ENCODE measurements at regions of chr12 and their contacts with region 1.

Region 1: DNA sequence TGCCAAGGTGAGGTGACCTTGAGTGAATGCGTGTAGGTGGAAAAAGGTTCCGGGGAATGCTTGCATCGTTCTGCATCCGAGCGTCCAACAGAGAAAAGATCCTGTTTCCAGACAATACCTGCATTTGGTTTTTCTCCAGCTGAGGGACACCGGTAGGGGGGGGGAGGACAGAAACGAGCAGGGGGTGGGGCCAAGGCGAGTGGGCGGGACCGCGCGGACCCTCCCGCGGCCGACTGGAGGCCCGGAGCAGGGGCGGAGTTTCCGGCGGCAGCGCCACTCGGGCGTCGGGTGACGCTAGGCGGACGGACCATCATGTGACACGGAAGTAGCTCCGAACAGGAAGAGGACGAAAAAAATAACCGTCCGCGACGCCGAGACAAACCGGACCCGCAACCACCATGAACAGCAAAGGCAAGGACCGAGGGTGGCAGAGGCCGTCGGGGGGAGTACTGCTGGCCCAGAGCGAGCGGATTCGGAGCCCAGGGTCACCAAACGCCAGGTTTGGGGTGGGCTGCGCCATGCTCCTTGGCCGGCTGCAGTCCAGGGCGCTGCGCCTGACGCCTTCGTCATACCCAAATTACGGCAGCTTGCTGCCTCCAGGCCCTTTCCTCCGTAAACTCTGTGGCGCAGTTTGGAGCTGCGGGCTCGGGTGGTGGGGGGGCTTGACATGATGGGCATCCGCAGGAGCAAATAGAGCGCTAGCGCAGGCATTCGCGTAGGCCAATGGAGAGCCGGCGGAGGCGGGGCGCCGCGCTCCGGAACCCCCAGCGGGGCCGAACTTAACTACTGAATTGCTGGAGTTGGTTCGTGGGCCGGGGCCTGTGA is at the start of gene DAZAP2:
- DNase-seq: peak; percentile 98
- ATAC-seq: peak; percentile 99
- H3K4me3 ChIP-seq: peak within 1 kb of the TSS; percentile 72 to 80
- H3K27ac ChIP-seq: peak within 1 kb of the TSS; percentile 92 to 97
- H3K4me1 ChIP-seq: no peaks in the 10 kb centered on the region
- H3K27me3 ChIP-seq: no peaks in the 10 kb centered on the region
- total RNA-seq, gene DAZAP2: 167 to 171 TPM

Region 2: DNA sequence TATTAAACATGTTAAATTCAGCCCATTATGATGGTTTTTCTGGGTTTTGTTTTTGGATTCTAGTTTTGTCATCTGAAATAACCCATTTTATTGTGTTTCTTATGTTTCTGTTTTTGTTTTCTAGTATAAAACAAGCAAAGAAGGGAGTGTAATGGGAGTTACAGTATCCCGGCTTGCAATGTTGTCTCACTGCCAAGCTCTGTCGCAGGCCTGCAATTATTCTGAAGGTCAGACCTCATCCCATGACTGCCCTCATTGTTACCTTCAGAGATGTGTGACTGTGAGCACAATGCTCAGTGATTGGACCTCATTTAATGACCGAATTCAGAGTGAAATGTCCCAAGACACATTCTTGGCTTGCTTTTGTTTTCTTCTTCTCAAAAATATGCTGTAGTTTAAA is 547.8 kb before region 1 on chr12:
- intact Hi-C with region 1: no loop called
- DNase-seq: no peak
- ATAC-seq: no peak
- H3K4me3 ChIP-seq: no peak overlapping the region
- H3K27ac ChIP-seq: no peak overlapping the region
- H3K4me1 ChIP-seq: no peaks in the 10 kb centered on the region
- H3K27me3 ChIP-seq: no peaks in the 10 kb centered on the region

Region 3: DNA sequence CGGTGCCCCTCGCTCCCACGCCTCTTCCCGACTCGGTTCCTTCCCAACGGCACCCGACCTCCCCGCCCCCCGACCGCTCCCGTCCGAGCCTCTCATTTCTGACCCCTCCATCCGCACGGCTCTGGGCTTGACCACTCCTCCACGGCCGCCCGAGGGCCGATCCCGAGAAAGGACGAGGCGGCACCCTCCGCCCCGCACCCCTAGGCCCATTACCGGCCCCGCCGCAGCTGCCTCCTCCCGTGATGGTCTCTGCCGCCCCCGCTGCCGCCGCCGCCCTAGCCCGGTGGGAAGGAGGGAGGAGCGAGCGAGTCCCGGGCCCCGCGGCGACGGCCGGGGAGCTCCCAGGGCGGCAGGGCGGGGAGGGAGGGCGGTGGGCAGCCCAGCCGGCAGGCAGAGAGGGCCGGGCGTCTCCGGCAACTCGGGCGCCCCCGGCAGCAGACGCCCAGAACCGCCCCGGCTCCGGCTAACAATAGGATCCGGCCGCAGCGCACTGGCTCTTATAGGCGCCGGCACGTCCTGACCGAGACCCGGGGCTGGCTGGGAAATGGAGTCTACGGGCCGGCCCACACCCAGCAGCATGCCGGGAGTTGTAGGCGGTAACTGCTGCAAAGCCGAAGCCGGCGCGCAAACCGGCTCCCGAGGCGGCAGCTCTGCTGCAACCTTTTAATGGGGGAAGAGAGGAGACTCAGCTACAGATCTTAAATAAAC is 155.4 kb before region 1 on chr12 and contains the start of gene CSRNP2:
- intact Hi-C with region 1: loop called in 1 of 2 experiments (anchors 5 kb)
- DNase-seq: peak; percentile 98 to 99
- ATAC-seq: peak; percentile 100
- H3K4me3 ChIP-seq: peak within 1 kb of the TSS; percentile 78 to 88
- H3K27ac ChIP-seq: peak within 1 kb of the TSS; percentile 62 to 79
- H3K4me1 ChIP-seq: no peaks in the 10 kb centered on the region
- H3K27me3 ChIP-seq: no peaks in the 10 kb centered on the region
- total RNA-seq, gene CSRNP2: 32.3 to 34.5 TPM

Region 4: DNA sequence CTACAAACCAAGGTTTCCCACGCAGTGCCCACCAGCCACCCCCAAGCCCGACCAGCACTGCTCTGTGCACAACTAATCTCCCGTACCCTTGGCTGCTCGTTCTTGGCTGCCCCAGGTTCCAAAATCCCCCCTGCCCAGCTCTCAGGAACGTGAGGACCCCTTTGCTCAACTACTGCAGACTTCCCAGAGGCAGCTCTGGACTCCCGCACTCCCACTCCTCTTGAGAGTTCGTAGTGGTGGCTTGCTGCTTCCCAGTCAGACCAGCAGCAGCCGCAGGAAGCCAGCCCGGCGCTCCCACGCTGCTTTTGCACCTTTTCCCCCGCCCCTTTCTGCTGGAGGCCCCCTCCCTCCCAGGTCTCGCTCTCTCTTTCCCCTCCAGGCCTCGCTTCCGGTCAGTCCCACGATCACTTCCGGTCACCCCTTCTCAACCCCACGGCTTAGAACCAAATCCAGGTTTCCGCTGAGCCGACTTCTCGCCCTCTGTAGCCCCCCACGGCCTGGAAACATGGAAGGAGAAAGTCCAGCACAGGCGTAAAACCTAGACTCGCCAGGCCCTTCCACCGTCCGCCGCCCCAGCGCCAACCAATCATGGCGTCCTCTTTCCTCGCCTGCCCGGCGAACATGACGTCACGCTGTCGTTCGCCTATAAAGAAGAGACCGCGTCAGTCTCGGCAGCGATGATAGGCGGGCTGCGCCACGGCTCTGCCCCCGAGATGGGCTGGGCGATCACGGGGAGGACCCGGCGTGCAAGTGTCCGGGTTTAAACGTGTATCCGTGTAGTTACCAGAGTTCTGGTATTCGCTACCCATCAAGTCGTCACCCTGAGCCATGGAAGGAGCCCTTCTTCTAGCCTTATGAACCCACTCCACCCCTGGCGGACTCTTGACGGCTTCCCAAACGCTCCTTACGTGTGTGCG is 65.9 kb before region 1 on chr12 and contains the start of gene TFCP2:
- intact Hi-C with region 1: loop called (anchors 2 kb)
- DNase-seq: peak; percentile 98 to 99
- ATAC-seq: peak; percentile 99
- H3K4me3 ChIP-seq: peak within 1 kb of the TSS; percentile 44 to 65
- H3K27ac ChIP-seq: peak within 1 kb of the TSS; percentile 78 to 83
- H3K4me1 ChIP-seq: no peaks in the 10 kb centered on the region
- H3K27me3 ChIP-seq: no peaks in the 10 kb centered on the region
- total RNA-seq, gene TFCP2: 15.6 to 25.4 TPM

Region 5: GRCh38 chr12:51217968-51218606 is 20.6 kb before region 1 on chr12 and contains the start of gene POU6F1:
- intact Hi-C with region 1: loop called in 1 of 2 experiments (anchors 2 kb)
- DNase-seq: peak; percentile 82 to 91
- ATAC-seq: peak; percentile 93
- H3K4me3 ChIP-seq: peak within 1 kb of the TSS; percentile 93 to 99
- H3K27ac ChIP-seq: peak within 1 kb of the TSS; percentile 89 to 100
- H3K4me1 ChIP-seq: no peaks in the 10 kb centered on the region
- H3K27me3 ChIP-seq: no peaks in the 10 kb centered on the region
- total RNA-seq, gene POU6F1: 29.3 to 36.5 TPM

Measured in aorta (tissue), 5 donors.